ENCODE measurements at regions of chr19 and their contacts with region 1.

Region 1: DNA sequence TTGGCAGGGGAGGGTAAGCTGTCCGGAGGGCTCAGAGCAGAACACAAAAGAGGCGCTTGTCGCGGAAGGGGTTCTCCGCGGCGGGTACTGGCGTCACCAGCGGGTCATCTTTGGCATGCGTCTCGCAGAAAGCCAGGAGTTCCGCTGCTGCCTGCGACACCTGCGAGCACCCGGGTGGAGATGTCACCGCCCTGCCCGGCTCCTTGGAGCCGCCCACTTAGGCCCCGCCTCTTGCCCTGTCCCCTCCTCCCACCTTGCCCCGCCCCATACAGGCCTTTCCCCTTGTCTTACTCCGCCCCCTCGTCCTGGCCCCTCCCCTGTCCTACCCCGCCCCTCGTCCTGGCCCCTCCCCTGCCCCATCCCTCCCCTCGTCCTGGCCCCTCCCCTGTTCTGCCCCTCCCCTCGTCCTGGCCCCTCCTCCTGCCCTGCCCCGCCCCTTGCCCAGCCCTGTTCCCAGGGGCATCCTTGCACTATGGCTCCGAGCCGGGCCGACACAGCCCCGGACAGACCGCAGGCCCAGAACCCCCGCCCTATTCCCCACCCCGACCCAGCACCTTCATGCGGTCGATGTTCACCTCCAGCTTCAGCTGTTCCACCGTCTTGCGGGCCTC is 1.9 kb downstream of the GNG8 start:
- DNase-seq: peak; percentile 86 to 99 (median 97)
- ATAC-seq: peak; percentile 91
- H3K4me3 ChIP-seq: peak overlapping the region; percentile 62
- H3K4me3 Mint-ChIP-seq: peak overlapping the region in 9 of 10 donors; percentile 81 to 90 (median 87)
- H3K27ac ChIP-seq: peak overlapping the region; percentile 90
- H3K27ac Mint-ChIP-seq: peak overlapping the region in 8 of 9 donors; percentile 66 to 98 (median 94)
- H3K4me1 ChIP-seq: peaks cover 22 to 23% of the 10 kb centered on the region in 2 donors
- H3K4me1 Mint-ChIP-seq: peaks cover 10 to 32% (median 23%) of the 10 kb centered on the region in 7 donors
- H3K27me3 ChIP-seq: no peaks in the 10 kb centered on the region
- H3K27me3 Mint-ChIP-seq: peaks cover 0 to 13% (median 0%) of the 10 kb centered on the region in 5 donors

Region 2: GRCh38 chr19:46431824-46432223 is 202.3 kb before region 1 on chr19:
- CTCF ChIA-PET with region 1: no interaction called
- POLR2A ChIA-PET with region 1: no interaction called
- intact Hi-C with region 1: no loop called
- DNase-seq: no peak
- ATAC-seq: no peak
- H3K4me3 ChIP-seq: no peak overlapping the region
- H3K4me3 Mint-ChIP-seq: no peak overlapping the region
- H3K27ac ChIP-seq: no peak overlapping the region
- H3K27ac Mint-ChIP-seq: no peak overlapping the region
- H3K4me1 ChIP-seq: peaks cover 0 to 2% of the 10 kb centered on the region in 2 donors
- H3K4me1 Mint-ChIP-seq: peaks cover 15 to 24% (median 19%) of the 10 kb centered on the region in 7 donors
- H3K27me3 ChIP-seq: peaks cover 0 to 4% of the 10 kb centered on the region in 2 donors
- H3K27me3 Mint-ChIP-seq: peaks cover 58 to 69% (median 64%) of the 10 kb centered on the region in 5 donors

Region 3: DNA sequence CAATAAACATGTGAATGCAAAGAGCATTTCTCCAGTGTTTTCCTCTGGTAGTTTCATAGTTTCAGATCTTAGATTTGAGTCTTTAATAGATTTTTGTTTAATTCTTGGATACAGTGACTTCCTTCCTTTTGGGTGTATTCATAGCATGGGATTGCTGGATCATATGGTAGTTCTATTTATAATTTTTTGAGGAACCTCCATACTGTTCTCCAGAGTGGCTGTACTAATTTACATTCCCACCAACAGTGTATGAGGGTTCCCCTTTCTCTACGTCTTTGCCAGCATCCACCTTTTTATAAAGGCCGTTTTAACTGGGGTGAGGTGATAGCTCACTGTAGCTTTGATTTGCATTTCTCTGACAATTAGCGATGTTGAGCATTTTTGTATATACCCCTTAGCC is 42.3 kb before region 1 on chr19:
- CTCF ChIA-PET with region 1: no interaction called
- POLR2A ChIA-PET with region 1: no interaction called
- intact Hi-C with region 1: no loop called
- DNase-seq: no peak
- ATAC-seq: no peak
- H3K4me3 ChIP-seq: no peak overlapping the region
- H3K4me3 Mint-ChIP-seq: no peak overlapping the region
- H3K27ac ChIP-seq: no peak overlapping the region
- H3K27ac Mint-ChIP-seq: no peak overlapping the region
- H3K4me1 ChIP-seq: no peaks in the 10 kb centered on the region
- H3K4me1 Mint-ChIP-seq: no peaks in the 10 kb centered on the region
- H3K27me3 ChIP-seq: no peaks in the 10 kb centered on the region
- H3K27me3 Mint-ChIP-seq: peaks cover 0 to 24% (median 0%) of the 10 kb centered on the region in 5 donors

Region 4: DNA sequence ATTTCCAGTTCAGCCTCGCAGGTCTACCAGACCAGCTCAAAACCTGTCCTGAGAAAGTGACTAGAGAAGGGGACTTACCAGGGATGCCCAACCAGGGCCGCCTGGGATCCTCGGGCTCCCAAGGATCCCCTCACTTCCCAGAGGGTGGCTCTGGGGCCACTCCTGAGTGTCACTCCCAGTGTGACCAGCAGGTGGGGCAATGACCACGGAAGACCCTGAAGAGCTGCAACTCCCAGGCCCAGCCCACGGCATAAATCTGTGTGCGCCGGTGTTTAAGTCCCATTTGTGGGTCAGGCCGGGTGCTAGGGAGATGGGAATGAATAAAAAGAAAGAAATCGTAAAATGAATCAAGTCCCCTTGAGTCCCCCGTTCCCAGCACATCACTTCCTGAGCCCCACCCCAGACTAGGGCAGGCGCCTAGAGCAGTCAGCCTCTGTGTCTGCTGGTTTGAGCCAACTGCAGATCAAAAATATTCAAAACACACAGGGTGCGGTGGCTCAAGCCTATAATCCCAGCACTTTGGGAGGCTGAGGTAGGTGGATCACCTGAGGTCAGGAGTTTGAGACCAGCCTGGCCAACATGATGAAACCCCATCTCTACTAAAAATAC is 19.9 kb before region 1 on chr19:
- CTCF ChIA-PET with region 1: interaction called, 9 read pairs
- POLR2A ChIA-PET with region 1: interaction called, 33 read pairs
- intact Hi-C with region 1: loop called (anchors 1 kb)
- DNase-seq: peak in 8 of 9 donors; percentile 70 to 83 (median 77)
- ATAC-seq: peak; percentile 79
- H3K4me3 ChIP-seq: no peak overlapping the region
- H3K4me3 Mint-ChIP-seq: peak overlapping the region; percentile 40 to 77 (median 71)
- H3K27ac ChIP-seq: peak overlapping the region; percentile 65
- H3K27ac Mint-ChIP-seq: peak overlapping the region; percentile 79 to 93 (median 89)
- H3K4me1 ChIP-seq: peaks cover 24 to 84% of the 10 kb centered on the region in 2 donors
- H3K4me1 Mint-ChIP-seq: peaks cover 55 to 85% (median 77%) of the 10 kb centered on the region in 7 donors
- H3K27me3 ChIP-seq: no peaks in the 10 kb centered on the region
- H3K27me3 Mint-ChIP-seq: no peaks in the 10 kb centered on the region

Region 5: GRCh38 chr19:46621191-46622117 is 12.7 kb before region 1 on chr19:
- CTCF ChIA-PET with region 1: interaction called, 9 read pairs
- POLR2A ChIA-PET with region 1: interaction called, 40 read pairs
- intact Hi-C with region 1: no loop called
- DNase-seq: peak in 1 of 9 donors; percentile 10
- ATAC-seq: no peak
- H3K4me3 ChIP-seq: no peak overlapping the region
- H3K4me3 Mint-ChIP-seq: peak overlapping the region in 9 of 10 donors; percentile 40 to 94 (median 56)
- H3K27ac ChIP-seq: peak overlapping the region; percentile 32
- H3K27ac Mint-ChIP-seq: peak overlapping the region; percentile 57 to 97 (median 72)
- H3K4me1 ChIP-seq: peaks cover 0 to 79% of the 10 kb centered on the region in 2 donors
- H3K4me1 Mint-ChIP-seq: peaks cover 43 to 72% (median 67%) of the 10 kb centered on the region in 7 donors
- H3K27me3 ChIP-seq: no peaks in the 10 kb centered on the region
- H3K27me3 Mint-ChIP-seq: peaks cover 0 to 6% (median 0%) of the 10 kb centered on the region in 5 donors

Region 6: GRCh38 chr19:46691104-46691503 is 57.0 kb after region 1 on chr19:
- CTCF ChIA-PET with region 1: no interaction called
- POLR2A ChIA-PET with region 1: no interaction called
- intact Hi-C with region 1: no loop called
- DNase-seq: no peak
- ATAC-seq: no peak
- H3K4me3 ChIP-seq: no peak overlapping the region
- H3K4me3 Mint-ChIP-seq: no peak overlapping the region
- H3K27ac ChIP-seq: peak overlapping the region; percentile 49
- H3K27ac Mint-ChIP-seq: peak overlapping the region in 6 of 9 donors; percentile 53 to 77 (median 61)
- H3K4me1 ChIP-seq: no peaks in the 10 kb centered on the region
- H3K4me1 Mint-ChIP-seq: peaks cover 0 to 5% (median 0%) of the 10 kb centered on the region in 7 donors
- H3K27me3 ChIP-seq: no peaks in the 10 kb centered on the region
- H3K27me3 Mint-ChIP-seq: no peaks in the 10 kb centered on the region

Region 7: DNA sequence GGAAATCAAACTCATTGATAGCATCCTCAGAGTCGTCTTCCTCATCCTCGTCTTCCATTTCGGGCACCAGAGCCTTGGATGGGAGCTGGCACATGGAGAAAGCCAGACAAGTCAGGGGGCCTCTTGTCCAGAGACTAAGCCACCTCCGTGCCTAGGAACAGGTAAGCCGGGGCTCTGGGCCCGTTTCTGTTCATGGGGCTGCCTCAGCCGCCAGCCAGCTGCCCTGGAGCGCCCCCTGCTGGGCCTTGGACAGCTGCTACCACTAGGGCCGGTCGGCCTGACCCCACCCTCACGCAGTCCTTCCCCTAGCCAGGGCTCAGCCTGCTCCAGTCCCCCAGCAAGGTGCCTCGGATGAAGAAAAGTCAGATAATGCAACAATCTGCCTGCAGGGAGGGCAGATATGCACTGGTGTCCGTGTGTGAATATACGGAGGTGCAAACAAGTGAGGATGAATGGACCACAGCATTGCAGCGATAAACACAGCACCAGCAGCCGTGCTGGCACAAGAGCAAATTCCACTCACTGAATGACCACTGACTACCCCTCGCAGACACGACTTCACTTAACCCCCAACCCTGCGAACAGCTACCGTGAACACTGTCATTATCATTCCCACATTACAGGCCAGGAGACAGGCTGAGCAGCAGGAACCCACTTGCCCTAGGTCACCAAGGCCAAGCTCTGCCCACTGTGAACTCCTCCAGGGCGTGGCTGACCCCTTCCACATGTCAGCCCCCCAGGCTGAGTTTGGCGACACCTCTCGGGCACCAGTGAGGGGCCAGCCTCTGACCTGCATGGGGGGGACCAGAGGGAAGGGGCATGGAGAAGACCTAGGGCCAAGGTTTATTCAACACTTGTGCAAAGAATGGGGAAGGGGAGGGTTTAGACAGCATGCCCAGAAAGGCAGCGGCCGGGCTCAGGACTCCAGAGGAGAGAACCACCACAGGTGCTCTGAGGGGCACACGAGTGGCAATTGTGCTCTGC is 94.8 kb after region 1 on chr19:
- CTCF ChIA-PET with region 1: no interaction called
- POLR2A ChIA-PET with region 1: no interaction called
- intact Hi-C with region 1: no loop called
- DNase-seq: peak; percentile 66 to 91 (median 82)
- ATAC-seq: peak; percentile 77
- H3K4me3 ChIP-seq: no peak overlapping the region
- H3K4me3 Mint-ChIP-seq: peak overlapping the region in 1 of 10 donors; percentile 29
- H3K27ac ChIP-seq: no peak overlapping the region
- H3K27ac Mint-ChIP-seq: peak overlapping the region in 6 of 9 donors; percentile 7 to 59 (median 28)
- H3K4me1 ChIP-seq: peaks cover 0 to 5% of the 10 kb centered on the region in 2 donors
- H3K4me1 Mint-ChIP-seq: peaks cover 8 to 32% (median 16%) of the 10 kb centered on the region in 7 donors
- H3K27me3 ChIP-seq: no peaks in the 10 kb centered on the region
- H3K27me3 Mint-ChIP-seq: no peaks in the 10 kb centered on the region